CD4-positive, alpha-beta T cell (primary cell): ENCODE measurements at regions of chr22 and their contacts with region 1.

Region 1: GRCh38 chr22:20495861-20496681 is 476 bp upstream of the KLHL22 start:
- DNase-seq: peak; percentile 79 to 97 (median 88)
- ATAC-seq: peak; percentile 95
- H3K4me3 ChIP-seq: peak overlapping the region; percentile 91
- H3K4me3 Mint-ChIP-seq: peak overlapping the region; percentile 94
- H3K27ac ChIP-seq: peak overlapping the region; percentile 93 to 94
- H3K27ac Mint-ChIP-seq: peak overlapping the region; percentile 84
- H3K4me1 ChIP-seq: peaks cover 51% of the 10 kb centered on the region
- H3K4me1 Mint-ChIP-seq: peaks cover 50% of the 10 kb centered on the region
- H3K27me3 ChIP-seq: no peaks in the 10 kb centered on the region
- H3K27me3 Mint-ChIP-seq: no peaks in the 10 kb centered on the region
- CTCF ChIP-seq: peak; percentile 80

Region 2: DNA sequence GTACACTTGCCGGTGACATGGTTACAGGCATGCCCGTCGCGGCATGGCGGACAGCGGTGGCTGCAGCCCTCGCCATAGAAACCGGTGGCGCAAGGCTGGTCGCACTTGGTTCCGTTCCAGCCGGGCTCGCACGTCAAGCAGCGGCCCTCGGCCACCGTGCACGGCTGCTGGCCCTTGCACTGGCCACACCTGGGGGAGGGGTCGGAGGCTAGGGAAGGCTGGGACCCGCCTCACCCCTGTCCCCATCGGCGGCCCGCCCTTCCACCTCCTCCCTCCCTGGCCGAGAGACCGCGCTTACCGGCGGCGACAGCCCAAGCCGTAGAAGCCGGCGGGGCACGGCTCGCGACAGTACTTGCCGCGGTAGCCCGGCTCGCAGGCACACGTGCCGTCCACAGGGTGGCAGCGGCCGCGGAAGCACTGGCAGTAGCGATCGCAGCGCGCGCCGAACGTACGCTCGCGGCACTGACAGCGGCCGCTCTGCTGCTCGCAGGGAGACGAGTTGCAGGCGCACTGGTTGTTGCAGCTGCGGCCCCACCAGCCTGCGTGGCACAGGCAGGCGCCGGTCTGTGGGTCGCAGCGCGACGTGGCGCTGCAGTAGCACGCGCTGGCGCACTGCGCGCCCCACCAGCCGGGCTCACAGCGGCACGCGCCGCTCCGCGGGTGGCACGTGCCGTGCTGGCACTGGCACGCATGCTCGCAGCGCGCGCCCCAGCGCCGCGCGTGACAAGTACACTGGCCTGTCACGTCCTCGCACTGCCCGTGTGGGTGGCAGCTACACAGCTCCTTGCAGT is 65.2 kb before region 1 on chr22:
- CTCF ChIA-PET with region 1: no interaction called
- POLR2A ChIA-PET with region 1: interaction called, 6 read pairs
- intact Hi-C with region 1: loop called in 1 of 2 experiments (anchors 2 kb)
- DNase-seq: peak; percentile 45 to 88 (median 57)
- ATAC-seq: peak; percentile 64
- H3K4me3 ChIP-seq: peak overlapping the region; percentile 78
- H3K4me3 Mint-ChIP-seq: peak overlapping the region; percentile 79
- H3K27ac ChIP-seq: no peak overlapping the region
- H3K27ac Mint-ChIP-seq: no peak overlapping the region
- H3K4me1 ChIP-seq: peaks cover 46% of the 10 kb centered on the region
- H3K4me1 Mint-ChIP-seq: peaks cover 17% of the 10 kb centered on the region
- H3K27me3 ChIP-seq: peaks cover 34 to 40% of the 10 kb centered on the region in 2 experiments
- H3K27me3 Mint-ChIP-seq: peaks cover 53% of the 10 kb centered on the region
- CTCF ChIP-seq: peak; percentile 54

Region 3: GRCh38 chr22:20456064-20456721 is 39.9 kb before region 1 on chr22:
- CTCF ChIA-PET with region 1: interaction called, 3 read pairs
- POLR2A ChIA-PET with region 1: interaction called, 4 read pairs
- intact Hi-C with region 1: loop called in 1 of 2 experiments (anchors 1 kb)
- DNase-seq: peak; percentile 60 to 90 (median 70)
- ATAC-seq: peak; percentile 100
- H3K4me3 ChIP-seq: no peak overlapping the region
- H3K4me3 Mint-ChIP-seq: no peak overlapping the region
- H3K27ac ChIP-seq: no peak overlapping the region
- H3K27ac Mint-ChIP-seq: no peak overlapping the region
- H3K4me1 ChIP-seq: peaks cover 26% of the 10 kb centered on the region
- H3K4me1 Mint-ChIP-seq: peaks cover 39% of the 10 kb centered on the region
- H3K27me3 ChIP-seq: no peaks in the 10 kb centered on the region
- H3K27me3 Mint-ChIP-seq: no peaks in the 10 kb centered on the region
- CTCF ChIP-seq: peak; percentile 89

Region 4: GRCh38 chr22:20472629-20473442 is 23.2 kb before region 1 on chr22:
- CTCF ChIA-PET with region 1: no interaction called
- POLR2A ChIA-PET with region 1: interaction called, 4 read pairs
- intact Hi-C with region 1: loop called in 1 of 2 experiments (anchors 2 kb)
- DNase-seq: no peak
- ATAC-seq: no peak
- H3K4me3 ChIP-seq: no peak overlapping the region
- H3K4me3 Mint-ChIP-seq: no peak overlapping the region
- H3K27ac ChIP-seq: no peak overlapping the region
- H3K27ac Mint-ChIP-seq: no peak overlapping the region
- H3K4me1 ChIP-seq: peaks cover 33% of the 10 kb centered on the region
- H3K4me1 Mint-ChIP-seq: peaks cover 41% of the 10 kb centered on the region
- H3K27me3 ChIP-seq: no peaks in the 10 kb centered on the region
- H3K27me3 Mint-ChIP-seq: no peaks in the 10 kb centered on the region
- CTCF ChIP-seq: no peak